Naive thymus-derived CD4-positive, alpha-beta T cell (primary cell): ENCODE measurements at regions of chr19 and their contacts with region 1.

Region 1: GRCh38 chr19:12294249-12295158 is at the start of gene ZNF44:
- DNase-seq: peak; percentile 77 to 96 (median 93)
- ATAC-seq: peak; percentile 99
- H3K4me3 ChIP-seq: peak within 1 kb of the TSS; percentile 99
- H3K4me3 Mint-ChIP-seq: peak within 1 kb of the TSS; percentile 89 to 99 (median 99)
- H3K27ac ChIP-seq: peak within 1 kb of the TSS; percentile 90
- H3K27ac Mint-ChIP-seq: peak within 1 kb of the TSS; percentile 93 to 99 (median 97)
- H3K4me1 ChIP-seq: peaks cover 13 to 20% of the 10 kb centered on the region in 2 donors
- H3K4me1 Mint-ChIP-seq: peaks cover 25 to 52% (median 36%) of the 10 kb centered on the region in 7 donors
- H3K27me3 ChIP-seq: no peaks in the 10 kb centered on the region
- H3K27me3 Mint-ChIP-seq: no peaks in the 10 kb centered on the region
- total RNA-seq, gene ZNF44: 16.3 to 67.4 (median 31.3) TPM

Region 2: GRCh38 chr19:12162882-12163806 is 131.4 kb before region 1 on chr19 and contains the start of gene ZNF136:
- CTCF ChIA-PET with region 1: no interaction called
- POLR2A ChIA-PET with region 1: interaction called, 10 read pairs
- intact Hi-C with region 1: loop called (anchors 1 to 2 kb)
- DNase-seq: peak; percentile 77 to 95 (median 91)
- ATAC-seq: peak; percentile 99
- H3K4me3 ChIP-seq: peak within 1 kb of the TSS; percentile 78
- H3K4me3 Mint-ChIP-seq: peak within 1 kb of the TSS; percentile 88 to 100 (median 98)
- H3K27ac ChIP-seq: peak within 1 kb of the TSS; percentile 96
- H3K27ac Mint-ChIP-seq: peak within 1 kb of the TSS; percentile 88 to 100 (median 98)
- H3K4me1 ChIP-seq: peaks cover 7 to 15% of the 10 kb centered on the region in 2 donors
- H3K4me1 Mint-ChIP-seq: peaks cover 28 to 64% (median 46%) of the 10 kb centered on the region in 7 donors
- H3K27me3 ChIP-seq: no peaks in the 10 kb centered on the region
- H3K27me3 Mint-ChIP-seq: no peaks in the 10 kb centered on the region
- total RNA-seq, gene ZNF136: 16.8 to 36.8 (median 31.1) TPM

Region 3: GRCh38 chr19:12260861-12261260 is 33.6 kb before region 1 on chr19:
- CTCF ChIA-PET with region 1: no interaction called
- POLR2A ChIA-PET with region 1: no interaction called
- intact Hi-C with region 1: no loop called
- DNase-seq: no peak
- ATAC-seq: no peak
- H3K4me3 ChIP-seq: no peak overlapping the region
- H3K4me3 Mint-ChIP-seq: no peak overlapping the region
- H3K27ac ChIP-seq: no peak overlapping the region
- H3K27ac Mint-ChIP-seq: no peak overlapping the region
- H3K4me1 ChIP-seq: no peaks in the 10 kb centered on the region
- H3K4me1 Mint-ChIP-seq: peaks cover 0 to 7% (median 0%) of the 10 kb centered on the region in 7 donors
- H3K27me3 ChIP-seq: no peaks in the 10 kb centered on the region
- H3K27me3 Mint-ChIP-seq: no peaks in the 10 kb centered on the region

Region 4: GRCh38 chr19:12278713-12279112 is 15.8 kb before region 1 on chr19:
- CTCF ChIA-PET with region 1: interaction called, 6 read pairs
- POLR2A ChIA-PET with region 1: interaction called, 30 read pairs
- intact Hi-C with region 1: loop called in 1 of 2 experiments (anchors 2 kb)
- DNase-seq: peak in 1 of 9 donors; percentile 31
- ATAC-seq: no peak
- H3K4me3 ChIP-seq: no peak overlapping the region
- H3K4me3 Mint-ChIP-seq: peak overlapping the region in 7 of 10 donors; percentile 16 to 80 (median 55)
- H3K27ac ChIP-seq: no peak overlapping the region
- H3K27ac Mint-ChIP-seq: peak overlapping the region in 6 of 9 donors; percentile 79 to 91 (median 84)
- H3K4me1 ChIP-seq: peaks cover 0 to 8% of the 10 kb centered on the region in 2 donors
- H3K4me1 Mint-ChIP-seq: peaks cover 0 to 63% (median 41%) of the 10 kb centered on the region in 7 donors
- H3K27me3 ChIP-seq: no peaks in the 10 kb centered on the region
- H3K27me3 Mint-ChIP-seq: no peaks in the 10 kb centered on the region

Region 5: GRCh38 chr19:12365236-12366162 is 71.0 kb after region 1 on chr19 and contains the start of gene ZNF442:
- CTCF ChIA-PET with region 1: no interaction called
- POLR2A ChIA-PET with region 1: interaction called, 6 read pairs
- intact Hi-C with region 1: loop called (anchors 1 kb)
- DNase-seq: peak; percentile 56 to 88 (median 80)
- ATAC-seq: peak; percentile 99
- H3K4me3 ChIP-seq: peak within 1 kb of the TSS; percentile 66
- H3K4me3 Mint-ChIP-seq: peak within 1 kb of the TSS; percentile 92 to 99 (median 97)
- H3K27ac ChIP-seq: peak within 1 kb of the TSS; percentile 68
- H3K27ac Mint-ChIP-seq: peak within 1 kb of the TSS; percentile 68 to 91 (median 85)
- H3K4me1 ChIP-seq: peaks cover 7 to 10% of the 10 kb centered on the region in 2 donors
- H3K4me1 Mint-ChIP-seq: peaks cover 0 to 33% (median 24%) of the 10 kb centered on the region in 7 donors
- H3K27me3 ChIP-seq: no peaks in the 10 kb centered on the region
- H3K27me3 Mint-ChIP-seq: peaks cover 0 to 10% (median 0%) of the 10 kb centered on the region in 5 donors
- total RNA-seq, gene ZNF442: 0.44 to 6.0 (median 0.58) TPM

Region 6: GRCh38 chr19:12484371-12485051 is 190.0 kb after region 1 on chr19 and contains the start of gene ZNF709:
- CTCF ChIA-PET with region 1: no interaction called
- POLR2A ChIA-PET with region 1: no interaction called
- intact Hi-C with region 1: loop called (anchors 1 to 5 kb)
- DNase-seq: peak; percentile 75 to 89 (median 85)
- ATAC-seq: peak; percentile 99
- H3K4me3 ChIP-seq: peak within 1 kb of the TSS; percentile 98
- H3K4me3 Mint-ChIP-seq: peak within 1 kb of the TSS; percentile 90 to 99 (median 94)
- H3K27ac ChIP-seq: peak within 1 kb of the TSS; percentile 85
- H3K27ac Mint-ChIP-seq: peak within 1 kb of the TSS; percentile 87 to 97 (median 91)
- H3K4me1 ChIP-seq: peaks cover 0 to 14% of the 10 kb centered on the region in 2 donors
- H3K4me1 Mint-ChIP-seq: peaks cover 26 to 41% (median 33%) of the 10 kb centered on the region in 7 donors
- H3K27me3 ChIP-seq: no peaks in the 10 kb centered on the region
- H3K27me3 Mint-ChIP-seq: no peaks in the 10 kb centered on the region
- total RNA-seq, gene ZNF709: 2.2 to 8.0 (median 5.3) TPM

Region 7: DNA sequence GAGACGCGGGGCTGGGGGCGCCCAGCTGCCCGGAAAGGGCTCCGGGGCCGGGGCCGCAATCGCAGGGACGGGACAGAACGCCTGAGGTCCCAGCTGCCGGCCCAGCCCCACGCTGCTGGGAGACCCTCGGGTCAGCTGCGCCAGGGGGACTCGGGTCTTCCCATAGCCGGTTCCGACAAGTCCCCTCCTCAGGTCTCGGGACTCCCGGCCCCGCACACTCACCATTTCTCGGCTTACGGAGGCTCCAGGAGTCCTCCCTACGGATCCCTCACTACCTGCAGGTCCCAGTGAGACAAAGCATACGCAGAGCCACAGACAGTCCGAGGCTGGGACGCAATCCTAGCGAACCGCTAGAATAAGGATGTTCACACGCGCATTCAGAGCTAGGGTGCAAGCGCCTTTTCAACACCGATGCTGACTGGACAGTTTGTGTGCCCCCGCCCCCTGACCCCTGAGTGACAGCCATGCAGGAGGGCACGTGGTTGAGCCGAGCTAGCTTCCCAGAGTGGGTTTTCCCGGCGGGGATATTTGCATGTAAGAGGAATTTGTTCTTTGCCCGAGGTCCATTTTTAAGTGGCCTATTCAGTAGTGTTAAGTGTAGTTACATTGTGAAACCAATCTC is 302.5 kb after region 1 on chr19:
- CTCF ChIA-PET with region 1: no interaction called
- POLR2A ChIA-PET with region 1: no interaction called
- intact Hi-C with region 1: no loop called
- DNase-seq: no peak
- ATAC-seq: no peak
- H3K4me3 ChIP-seq: no peak overlapping the region
- H3K4me3 Mint-ChIP-seq: no peak overlapping the region
- H3K27ac ChIP-seq: no peak overlapping the region
- H3K27ac Mint-ChIP-seq: no peak overlapping the region
- H3K4me1 ChIP-seq: no peaks in the 10 kb centered on the region
- H3K4me1 Mint-ChIP-seq: peaks cover 0 to 4% (median 0%) of the 10 kb centered on the region in 7 donors
- H3K27me3 ChIP-seq: no peaks in the 10 kb centered on the region
- H3K27me3 Mint-ChIP-seq: no peaks in the 10 kb centered on the region

Region 8: DNA sequence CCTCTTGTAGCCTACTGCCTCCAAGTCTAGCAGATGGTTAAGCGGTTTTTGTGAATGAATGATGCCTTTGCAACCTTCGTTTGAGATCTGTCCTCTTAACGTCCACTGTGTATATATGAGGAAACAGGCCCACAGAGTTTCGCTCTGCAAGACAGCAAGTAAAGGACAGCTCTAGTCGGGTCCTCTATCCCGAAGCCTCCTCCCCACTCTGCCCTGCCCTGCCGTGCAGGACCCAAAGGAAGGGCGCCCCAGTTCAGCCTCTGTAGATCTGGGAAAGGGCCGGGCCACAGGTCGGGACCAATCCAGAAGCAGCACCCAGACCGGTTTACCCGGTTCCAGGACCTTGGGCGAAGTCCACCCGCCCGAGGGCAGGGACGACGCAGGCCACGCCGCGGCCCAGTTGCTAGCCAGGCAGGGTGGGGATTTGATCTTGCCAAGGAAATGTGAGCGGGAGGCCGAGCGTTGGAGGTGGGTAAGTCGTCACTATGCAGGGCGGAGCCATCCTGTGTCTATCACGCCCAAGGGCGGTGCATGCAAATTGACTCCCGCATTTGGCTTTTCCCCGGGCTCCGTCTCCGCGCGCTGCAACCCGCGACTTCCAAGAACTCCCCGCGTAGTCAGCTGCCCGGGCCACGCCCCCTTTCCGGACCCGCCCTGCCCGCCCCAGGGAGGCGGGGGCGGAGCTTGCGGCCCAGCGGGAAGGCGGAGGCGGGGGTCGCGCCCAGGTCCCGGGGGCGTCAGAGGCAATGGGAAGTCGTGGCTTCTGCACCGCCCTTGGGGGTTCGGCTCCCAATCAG is 868.2 kb after region 1 on chr19:
- CTCF ChIA-PET with region 1: no interaction called
- POLR2A ChIA-PET with region 1: no interaction called
- intact Hi-C with region 1: loop called in 1 of 2 experiments (anchors 5 kb)
- DNase-seq: peak; percentile 46 to 91 (median 75)
- ATAC-seq: peak; percentile 73
- H3K4me3 ChIP-seq: peak overlapping the region; percentile 60
- H3K4me3 Mint-ChIP-seq: peak overlapping the region; percentile 85 to 94 (median 90)
- H3K27ac ChIP-seq: peak overlapping the region; percentile 90
- H3K27ac Mint-ChIP-seq: peak overlapping the region; percentile 92 to 99 (median 97)
- H3K4me1 ChIP-seq: peaks cover 54 to 73% of the 10 kb centered on the region in 2 donors
- H3K4me1 Mint-ChIP-seq: peaks cover 26 to 87% (median 67%) of the 10 kb centered on the region in 7 donors
- H3K27me3 ChIP-seq: no peaks in the 10 kb centered on the region
- H3K27me3 Mint-ChIP-seq: no peaks in the 10 kb centered on the region